Activated naive CD4-positive, alpha-beta T cell treated with anti-CD3 and anti-CD28 coated beads for 36 hours (primary cell): ENCODE measurements at regions of chr3 and their contacts with region 1.

Region 1: DNA sequence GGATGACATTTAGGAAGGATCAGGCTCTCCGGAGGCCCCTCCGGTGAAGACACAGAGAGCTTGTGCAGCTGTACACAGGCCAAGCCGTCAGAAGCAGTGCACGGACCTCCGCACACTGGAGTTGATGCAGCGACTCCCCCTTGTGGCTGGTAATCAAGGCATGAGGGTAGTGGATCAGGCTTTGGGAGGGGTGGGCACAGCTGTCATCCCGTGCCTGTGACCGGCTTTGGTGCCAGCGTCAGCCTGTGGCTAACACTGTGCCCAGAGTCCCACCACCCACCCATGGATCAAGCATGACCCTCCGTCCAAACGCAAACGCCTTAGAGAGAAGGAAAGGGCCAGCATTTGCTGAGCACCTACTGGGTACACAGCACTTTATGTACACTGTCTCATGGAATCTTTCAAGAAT is 8.2 kb upstream of the GRIP2 start:
- DNase-seq: peak; percentile 57
- H3K4me3 Mint-ChIP-seq: no peak overlapping the region
- H3K27ac Mint-ChIP-seq: no peak overlapping the region
- H3K4me1 Mint-ChIP-seq: no peaks in the 10 kb centered on the region
- H3K27me3 Mint-ChIP-seq: peaks cover 31% of the 10 kb centered on the region

Region 2: DNA sequence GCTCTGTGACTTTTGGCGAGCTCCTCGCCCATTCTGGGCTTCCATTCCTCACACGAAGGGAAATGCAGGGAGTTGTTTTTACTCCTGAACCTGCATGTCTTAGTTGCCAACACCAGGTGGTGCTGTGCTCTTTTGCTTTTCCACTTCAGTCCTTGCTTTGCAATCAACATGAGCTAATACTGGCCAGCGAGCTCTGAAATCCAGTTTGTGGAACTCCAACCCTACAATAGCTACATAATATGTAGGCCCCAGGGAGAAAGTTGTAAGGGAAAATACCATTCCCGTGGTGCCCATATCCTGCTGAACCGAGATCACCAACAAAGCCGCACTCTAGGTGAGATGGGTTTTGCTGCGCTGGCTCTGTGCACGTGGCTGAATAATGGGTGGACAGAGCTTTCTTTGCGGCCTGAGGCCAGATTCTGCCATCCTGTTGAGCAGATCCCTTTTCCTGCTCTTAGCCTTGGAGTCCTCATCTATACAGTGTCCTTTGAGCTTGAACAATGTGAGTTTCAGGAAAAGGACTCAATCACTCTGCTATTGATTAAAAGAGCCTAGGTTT is 344.7 kb before region 1 on chr3:
- CTCF ChIA-PET with region 1: no interaction called
- intact Hi-C with region 1: loop called (anchors 2 kb)
- DNase-seq: peak; percentile 64
- H3K4me3 Mint-ChIP-seq: no peak overlapping the region
- H3K27ac Mint-ChIP-seq: no peak overlapping the region
- H3K4me1 Mint-ChIP-seq: peaks cover 2% of the 10 kb centered on the region
- H3K27me3 Mint-ChIP-seq: no peaks in the 10 kb centered on the region

Region 3: GRCh38 chr3:14508961-14509795 is 39.1 kb before region 1 on chr3:
- CTCF ChIA-PET with region 1: interaction called, 14 read pairs
- intact Hi-C with region 1: loop called (anchors 1 kb)
- DNase-seq: peak; percentile 82
- H3K4me3 Mint-ChIP-seq: no peak overlapping the region
- H3K27ac Mint-ChIP-seq: no peak overlapping the region
- H3K4me1 Mint-ChIP-seq: peaks cover 5% of the 10 kb centered on the region
- H3K27me3 Mint-ChIP-seq: no peaks in the 10 kb centered on the region